Naive thymus-derived CD4-positive, alpha-beta T cell (primary cell): ENCODE measurements at regions of chr17 and their contacts with region 1.

Region 1: DNA sequence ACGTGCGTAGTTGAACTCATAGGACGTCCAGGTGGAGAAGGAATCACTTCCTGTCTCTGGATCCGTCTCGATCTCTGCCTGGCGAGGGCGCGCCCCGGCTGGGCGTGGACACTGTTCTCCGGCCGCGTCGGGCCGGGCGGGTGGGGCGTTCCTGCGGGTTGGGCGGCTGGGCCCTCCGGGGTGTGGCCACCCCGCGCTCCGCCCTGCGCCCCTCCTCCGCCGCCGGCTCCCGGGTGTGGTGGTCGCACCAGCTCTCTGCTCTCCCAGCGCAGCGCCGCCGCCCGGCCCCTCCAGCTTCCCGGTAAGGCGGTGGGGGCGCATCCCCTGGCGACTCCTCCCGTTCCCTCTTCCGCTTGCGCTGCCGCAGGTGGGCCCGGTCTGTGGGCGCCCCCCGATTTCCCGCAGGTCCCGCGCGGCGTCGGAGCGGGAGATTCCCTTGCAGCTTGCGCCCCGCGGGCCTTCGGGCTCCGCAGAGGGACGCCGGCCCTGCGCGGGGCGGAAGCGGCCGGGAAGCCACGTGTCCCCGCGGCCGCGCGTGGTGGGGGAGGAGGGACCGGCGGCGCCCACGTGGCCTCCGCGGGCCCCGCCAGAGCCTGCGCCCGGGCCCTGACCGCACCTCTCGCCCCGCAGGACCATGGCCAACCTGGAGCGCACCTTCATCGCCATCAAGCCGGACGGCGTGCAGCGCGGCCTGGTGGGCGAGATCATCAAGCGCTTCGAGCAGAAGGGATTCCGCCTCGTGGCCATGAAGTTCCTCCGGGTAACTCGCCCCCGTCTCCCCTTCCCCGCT is at the start of gene NME2:
- DNase-seq: peak; percentile 42 to 87 (median 50)
- ATAC-seq: peak; percentile 85
- H3K4me3 ChIP-seq: peak within 1 kb of the TSS; percentile 89
- H3K4me3 Mint-ChIP-seq: peak within 1 kb of the TSS; percentile 87 to 98 (median 95)
- H3K27ac ChIP-seq: peak within 1 kb of the TSS; percentile 80
- H3K27ac Mint-ChIP-seq: peak within 1 kb of the TSS; percentile 89 to 99 (median 95)
- H3K4me1 ChIP-seq: peaks cover 0 to 5% of the 10 kb centered on the region in 2 donors
- H3K4me1 Mint-ChIP-seq: peaks cover 0 to 36% (median 24%) of the 10 kb centered on the region in 7 donors
- H3K27me3 ChIP-seq: no peaks in the 10 kb centered on the region
- H3K27me3 Mint-ChIP-seq: no peaks in the 10 kb centered on the region
- total RNA-seq, gene NME2: 133 to 457 (median 179) TPM

Region 2: DNA sequence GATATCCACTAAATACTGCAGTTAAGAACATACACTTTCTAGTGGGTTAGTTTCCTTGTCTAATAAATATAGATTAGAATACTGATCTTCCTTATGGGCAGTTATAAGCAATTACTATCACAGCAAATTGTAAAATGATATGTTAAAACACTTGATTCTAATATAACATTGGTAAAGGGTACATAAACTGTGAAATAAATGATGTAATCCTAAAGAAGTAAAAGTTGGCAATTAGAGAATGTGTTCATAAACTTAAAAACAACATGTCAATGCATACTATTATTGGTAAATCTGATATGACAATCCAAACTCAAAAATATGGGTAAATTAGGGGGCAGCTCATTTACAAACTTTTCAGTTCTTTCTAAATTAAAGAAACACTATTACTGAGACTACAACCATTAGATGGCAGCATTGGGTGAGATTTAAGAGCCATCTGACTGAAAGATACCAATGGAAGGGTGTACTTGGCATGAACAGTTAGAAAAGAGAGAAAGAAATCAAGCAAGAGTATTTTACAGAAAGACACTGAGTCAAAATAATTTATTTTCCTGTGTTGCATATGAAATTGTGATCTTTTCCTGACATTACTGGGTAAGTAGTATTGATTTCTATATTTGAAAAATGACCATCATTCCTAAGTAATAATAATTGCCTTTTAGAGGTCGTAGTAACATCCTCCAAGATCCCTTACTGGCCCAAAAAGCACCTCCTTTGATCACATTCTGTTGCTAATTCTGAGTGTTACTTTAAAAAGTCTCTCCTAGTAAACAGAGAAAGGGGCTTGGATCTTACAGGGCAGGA is 165.4 kb before region 1 on chr17:
- CTCF ChIA-PET with region 1: interaction called, 3 read pairs
- POLR2A ChIA-PET with region 1: interaction called, 3 read pairs
- intact Hi-C with region 1: loop called in 1 of 2 experiments (anchors 1 kb)
- DNase-seq: peak in 7 of 9 donors; percentile 55 to 74 (median 65)
- ATAC-seq: peak; percentile 82
- H3K4me3 ChIP-seq: no peak overlapping the region
- H3K4me3 Mint-ChIP-seq: no peak overlapping the region
- H3K27ac ChIP-seq: no peak overlapping the region
- H3K27ac Mint-ChIP-seq: peak overlapping the region in 3 of 9 donors; percentile 11 to 60 (median 30)
- H3K4me1 ChIP-seq: no peaks in the 10 kb centered on the region
- H3K4me1 Mint-ChIP-seq: peaks cover 0 to 6% (median 5%) of the 10 kb centered on the region in 7 donors
- H3K27me3 ChIP-seq: no peaks in the 10 kb centered on the region
- H3K27me3 Mint-ChIP-seq: no peaks in the 10 kb centered on the region